B cell (primary cell): ENCODE measurements at regions of chr4 and their contacts with region 1.

Region 1: DNA sequence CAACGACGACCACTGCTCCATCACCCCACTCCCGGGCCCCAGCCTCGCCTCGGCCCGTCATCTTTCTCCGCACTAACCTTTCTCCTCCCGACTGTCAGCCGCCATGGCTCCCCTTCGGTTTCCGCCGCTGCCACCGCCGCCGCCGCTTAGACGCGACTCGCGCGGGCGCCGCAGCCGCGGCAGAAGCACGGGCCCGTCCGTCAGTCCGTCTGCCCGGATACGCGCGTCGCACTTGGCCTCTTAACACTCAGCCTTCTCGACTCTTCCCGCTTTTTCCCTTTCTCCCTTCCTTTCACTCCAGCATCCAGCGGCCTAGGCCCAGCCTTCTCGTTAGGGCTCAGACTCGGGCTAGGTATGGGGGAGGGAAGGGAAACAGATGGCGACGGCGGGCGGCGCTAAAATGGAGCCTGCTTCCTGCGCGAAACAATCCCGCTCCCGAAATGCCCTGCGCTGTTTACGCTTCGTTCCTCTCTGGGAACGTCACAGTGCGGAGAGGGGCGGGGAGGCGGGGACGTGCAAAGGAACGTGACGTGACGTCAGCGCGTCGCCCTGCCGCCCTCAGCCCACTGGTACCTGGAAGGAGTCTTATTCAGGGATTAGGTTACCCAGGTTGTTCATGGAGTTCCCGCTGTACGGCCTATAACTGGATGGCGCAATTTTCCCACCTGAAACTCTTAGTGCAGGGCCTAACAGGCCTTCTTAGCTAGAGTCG is at the start of gene YTHDC1:
- DNase-seq: peak; percentile 97
- ATAC-seq: peak; percentile 97
- H3K4me3 ChIP-seq: peak within 1 kb of the TSS; percentile 76 to 99 (median 93)
- H3K4me3 Mint-ChIP-seq: peak within 1 kb of the TSS; percentile 98
- H3K27ac ChIP-seq: peak within 1 kb of the TSS; percentile 91 to 94
- H3K27ac Mint-ChIP-seq: peak within 1 kb of the TSS; percentile 99
- H3K4me1 ChIP-seq: peaks cover 27 to 30% of the 10 kb centered on the region in 2 donors
- H3K4me1 Mint-ChIP-seq: peaks cover 39% of the 10 kb centered on the region
- H3K27me3 ChIP-seq: no peaks in the 10 kb centered on the region
- H3K27me3 Mint-ChIP-seq: no peaks in the 10 kb centered on the region
- CTCF ChIP-seq: no peak
- total RNA-seq, gene YTHDC1: 175 and 179 TPM in 2 replicates

Region 2: GRCh38 chr4:68375667-68376559 is 26.1 kb after region 1 on chr4:
- CTCF ChIA-PET with region 1: interaction called, 5 read pairs
- POLR2A ChIA-PET with region 1: no interaction called
- intact Hi-C with region 1: loop called (anchors 1 kb)
- DNase-seq: peak; percentile 74
- ATAC-seq: peak; percentile 76
- H3K4me3 ChIP-seq: peak overlapping the region in 4 of 5 experiments; percentile 5 to 63 (median 41)
- H3K4me3 Mint-ChIP-seq: peak overlapping the region; percentile 83
- H3K27ac ChIP-seq: no peak overlapping the region
- H3K27ac Mint-ChIP-seq: peak overlapping the region; percentile 5
- H3K4me1 ChIP-seq: peaks cover 0 to 6% of the 10 kb centered on the region in 2 donors
- H3K4me1 Mint-ChIP-seq: peaks cover 11% of the 10 kb centered on the region
- H3K27me3 ChIP-seq: peaks cover 0 to 6% (median 2%) of the 10 kb centered on the region in 4 experiments
- H3K27me3 Mint-ChIP-seq: peaks cover 22% of the 10 kb centered on the region
- CTCF ChIP-seq: peak; percentile 87

Region 3: GRCh38 chr4:68569466-68570121 is 219.8 kb after region 1 on chr4:
- CTCF ChIA-PET with region 1: no interaction called
- POLR2A ChIA-PET with region 1: no interaction called
- intact Hi-C with region 1: loop called (anchors 5 kb)
- DNase-seq: peak; percentile 24
- ATAC-seq: peak; percentile 14
- H3K4me3 ChIP-seq: no peak overlapping the region
- H3K4me3 Mint-ChIP-seq: peak overlapping the region; percentile 10
- H3K27ac ChIP-seq: peak overlapping the region in 1 of 2 donors; percentile 15
- H3K27ac Mint-ChIP-seq: peak overlapping the region; percentile 74
- H3K4me1 ChIP-seq: peaks cover 0 to 9% of the 10 kb centered on the region in 2 donors
- H3K4me1 Mint-ChIP-seq: peaks cover 15% of the 10 kb centered on the region
- H3K27me3 ChIP-seq: no peaks in the 10 kb centered on the region
- H3K27me3 Mint-ChIP-seq: no peaks in the 10 kb centered on the region
- CTCF ChIP-seq: no peak